ENCODE measurements at regions of chr17 and their contacts with region 1.

Region 1: DNA sequence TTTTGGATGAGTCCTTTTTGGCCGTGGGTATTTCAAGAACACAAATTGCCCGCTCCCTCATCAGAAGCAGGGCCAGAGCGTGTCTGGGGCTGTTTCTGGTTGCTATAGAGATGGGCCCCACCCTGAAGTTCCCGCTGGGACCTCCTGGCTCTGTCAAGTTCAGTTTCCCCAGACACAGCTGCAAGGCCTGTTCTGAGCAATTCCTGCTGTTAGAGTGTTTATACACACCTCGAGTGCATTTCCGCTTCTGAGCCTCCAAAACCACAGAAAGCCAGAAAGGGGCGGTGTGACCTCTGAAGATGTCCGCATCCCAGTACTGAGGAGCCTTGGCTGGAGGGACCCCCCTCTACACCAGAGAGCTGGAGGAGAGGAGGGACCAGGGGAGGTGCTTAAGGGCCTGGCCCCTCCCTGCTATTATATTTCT is 9.3 kb upstream of the WBP2 start:
- DNase-seq: peak; percentile 74
- ATAC-seq: peak; percentile 88
- H3K4me3 Mint-ChIP-seq: peak overlapping the region; percentile 39
- H3K27ac Mint-ChIP-seq: peak overlapping the region; percentile 83
- H3K4me1 Mint-ChIP-seq: peaks cover 29% of the 10 kb centered on the region
- H3K27me3 Mint-ChIP-seq: no peaks in the 10 kb centered on the region

Region 2: GRCh38 chr17:75779231-75779986 is 85.1 kb before region 1 on chr17:
- CTCF ChIA-PET with region 1: interaction called, 10 read pairs
- POLR2A ChIA-PET with region 1: interaction called, 5 read pairs
- DNase-seq: peak; percentile 97
- ATAC-seq: peak; percentile 70
- H3K4me3 Mint-ChIP-seq: peak overlapping the region; percentile 86
- H3K27ac Mint-ChIP-seq: peak overlapping the region; percentile 97
- H3K4me1 Mint-ChIP-seq: peaks cover 51% of the 10 kb centered on the region
- H3K27me3 Mint-ChIP-seq: peaks cover 3% of the 10 kb centered on the region

Region 3: GRCh38 chr17:75845049-75845860 is 19.2 kb before region 1 on chr17:
- CTCF ChIA-PET with region 1: interaction called, 21 read pairs
- POLR2A ChIA-PET with region 1: interaction called, 3 read pairs
- DNase-seq: peak; percentile 74
- ATAC-seq: peak; percentile 49
- H3K4me3 Mint-ChIP-seq: peak overlapping the region; percentile 57
- H3K27ac Mint-ChIP-seq: peak overlapping the region; percentile 77
- H3K4me1 Mint-ChIP-seq: peaks cover 36% of the 10 kb centered on the region
- H3K27me3 Mint-ChIP-seq: no peaks in the 10 kb centered on the region

Region 4: DNA sequence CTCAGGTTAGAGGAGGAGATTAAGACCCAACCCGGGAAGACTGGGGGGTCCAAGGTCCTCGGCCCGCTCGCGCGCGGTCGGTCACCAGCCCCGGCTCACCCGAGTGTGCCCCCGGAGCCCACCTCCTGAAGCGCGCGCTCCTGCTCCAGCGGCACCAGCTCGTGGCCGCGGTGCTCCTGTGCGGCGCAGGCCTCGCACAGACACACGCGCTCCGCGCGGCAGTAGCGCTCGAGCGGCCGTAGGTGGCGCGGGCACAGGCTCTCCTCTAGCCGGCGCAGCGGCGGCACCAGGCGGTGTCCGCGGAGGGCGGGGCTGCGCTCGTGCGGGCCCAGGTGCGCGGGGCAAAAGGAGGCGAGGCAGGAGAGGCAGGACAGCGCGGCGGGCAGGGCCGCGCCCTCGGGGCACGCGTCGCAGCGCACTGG is 13.3 kb after region 1 on chr17:
- CTCF ChIA-PET with region 1: interaction called, 307 read pairs
- POLR2A ChIA-PET with region 1: interaction called, 23 read pairs
- DNase-seq: peak; percentile 82
- ATAC-seq: peak; percentile 77
- H3K4me3 Mint-ChIP-seq: peak overlapping the region; percentile 91
- H3K27ac Mint-ChIP-seq: peak overlapping the region; percentile 92
- H3K4me1 Mint-ChIP-seq: peaks cover 54% of the 10 kb centered on the region
- H3K27me3 Mint-ChIP-seq: peaks cover 8% of the 10 kb centered on the region

Region 5: GRCh38 chr17:75896415-75897159 is 32.1 kb after region 1 on chr17 and contains the start of gene TRIM65:
- CTCF ChIA-PET with region 1: interaction called, 11 read pairs
- POLR2A ChIA-PET with region 1: interaction called, 3 read pairs
- DNase-seq: peak; percentile 80
- ATAC-seq: peak; percentile 88
- H3K4me3 Mint-ChIP-seq: peak within 1 kb of the TSS; percentile 82
- H3K27ac Mint-ChIP-seq: peak within 1 kb of the TSS; percentile 82
- H3K4me1 Mint-ChIP-seq: peaks cover 28% of the 10 kb centered on the region
- H3K27me3 Mint-ChIP-seq: no peaks in the 10 kb centered on the region
- total RNA-seq, gene TRIM65: 35.8 to 37.3 TPM

Region 6: GRCh38 chr17:76079956-76080767 is 215.7 kb after region 1 on chr17:
- CTCF ChIA-PET with region 1: no interaction called
- POLR2A ChIA-PET with region 1: no interaction called
- DNase-seq: no peak
- ATAC-seq: no peak
- H3K4me3 Mint-ChIP-seq: no peak overlapping the region
- H3K27ac Mint-ChIP-seq: no peak overlapping the region
- H3K4me1 Mint-ChIP-seq: peaks cover 24% of the 10 kb centered on the region
- H3K27me3 Mint-ChIP-seq: peaks cover 42% of the 10 kb centered on the region